HEK293 (cell line): ENCODE measurements at regions of chr21 and their contacts with region 1.

Region 1: GRCh38 chr21:29372063-29372802 is 73.5 kb downstream of the BACH1 start:
- H3K4me3 ChIP-seq: no peak overlapping the region
- H3K27ac ChIP-seq: no peak overlapping the region
- H3K4me1 ChIP-seq: no peaks in the 10 kb centered on the region
- CTCF ChIP-seq: peak; percentile 66

Region 2: DNA sequence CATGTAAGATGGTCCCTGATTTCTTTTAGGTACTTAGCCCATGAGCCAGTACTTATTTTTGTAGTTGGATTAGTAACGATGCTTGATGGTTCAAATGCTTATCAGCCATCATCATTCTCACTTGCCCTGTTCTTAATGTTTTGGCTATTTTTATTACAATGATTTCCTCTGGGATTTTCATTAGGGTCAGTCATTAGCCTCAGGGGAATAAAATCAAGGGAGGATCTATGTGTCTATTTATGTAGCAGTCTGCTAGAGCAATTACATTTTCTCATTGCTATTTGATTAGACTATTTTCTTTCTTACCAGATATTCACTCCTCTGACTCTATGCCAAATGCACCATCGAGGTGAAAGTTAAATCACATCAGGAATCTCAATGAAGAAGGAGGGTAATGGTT is 287.9 kb before region 1 on chr21:
- CTCF ChIA-PET with region 1: interaction called, 42 read pairs
- POLR2A ChIA-PET with region 1: no interaction called
- H3K4me3 ChIP-seq: no peak overlapping the region
- H3K27ac ChIP-seq: no peak overlapping the region
- H3K4me1 ChIP-seq: 0 out of 2 replicates have a peak, but pooled peaks cover 8% of the 10 kb centered on the region
- CTCF ChIP-seq: no peak

Region 3: DNA sequence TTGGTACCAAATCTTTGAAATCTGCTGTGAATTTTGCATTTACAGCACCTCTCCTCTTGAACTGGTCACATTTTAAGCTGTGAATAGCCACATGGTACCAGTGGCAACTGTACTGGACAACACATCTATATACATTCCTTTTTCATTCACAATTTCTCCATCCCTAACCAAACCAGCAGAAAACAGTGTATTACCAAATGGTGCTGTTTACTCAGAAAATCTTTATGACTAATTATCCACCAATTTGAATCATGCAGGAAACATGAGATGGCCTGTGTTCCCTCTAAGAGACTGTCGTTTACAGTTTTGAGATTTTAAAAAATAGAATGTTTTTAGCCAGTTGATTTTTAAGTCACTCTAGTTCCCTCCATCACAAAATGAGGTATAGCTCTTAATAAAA is 281.2 kb before region 1 on chr21:
- CTCF ChIA-PET with region 1: interaction called, 42 read pairs
- POLR2A ChIA-PET with region 1: no interaction called
- H3K4me3 ChIP-seq: no peak overlapping the region
- H3K27ac ChIP-seq: no peak overlapping the region
- H3K4me1 ChIP-seq: no peaks in the 10 kb centered on the region
- CTCF ChIP-seq: no peak

Region 4: GRCh38 chr21:29205009-29205408 is 167.2 kb before region 1 on chr21:
- CTCF ChIA-PET with region 1: no interaction called
- POLR2A ChIA-PET with region 1: no interaction called
- H3K4me3 ChIP-seq: no peak overlapping the region
- H3K27ac ChIP-seq: no peak overlapping the region
- H3K4me1 ChIP-seq: no peaks in the 10 kb centered on the region
- CTCF ChIP-seq: no peak

Region 5: GRCh38 chr21:29343519-29343918 is 28.7 kb before region 1 on chr21:
- CTCF ChIA-PET with region 1: interaction called, 16 read pairs
- POLR2A ChIA-PET with region 1: no interaction called
- H3K4me3 ChIP-seq: no peak overlapping the region
- H3K27ac ChIP-seq: no peak overlapping the region
- H3K4me1 ChIP-seq: peaks cover 12% of the 10 kb centered on the region
- CTCF ChIP-seq: no peak

Region 6: GRCh38 chr21:29351691-29352090 is 20.5 kb before region 1 on chr21:
- CTCF ChIA-PET with region 1: interaction called, 16 read pairs
- POLR2A ChIA-PET with region 1: no interaction called
- H3K4me3 ChIP-seq: no peak overlapping the region
- H3K27ac ChIP-seq: no peak overlapping the region
- H3K4me1 ChIP-seq: no peaks in the 10 kb centered on the region
- CTCF ChIP-seq: no peak

Region 7: DNA sequence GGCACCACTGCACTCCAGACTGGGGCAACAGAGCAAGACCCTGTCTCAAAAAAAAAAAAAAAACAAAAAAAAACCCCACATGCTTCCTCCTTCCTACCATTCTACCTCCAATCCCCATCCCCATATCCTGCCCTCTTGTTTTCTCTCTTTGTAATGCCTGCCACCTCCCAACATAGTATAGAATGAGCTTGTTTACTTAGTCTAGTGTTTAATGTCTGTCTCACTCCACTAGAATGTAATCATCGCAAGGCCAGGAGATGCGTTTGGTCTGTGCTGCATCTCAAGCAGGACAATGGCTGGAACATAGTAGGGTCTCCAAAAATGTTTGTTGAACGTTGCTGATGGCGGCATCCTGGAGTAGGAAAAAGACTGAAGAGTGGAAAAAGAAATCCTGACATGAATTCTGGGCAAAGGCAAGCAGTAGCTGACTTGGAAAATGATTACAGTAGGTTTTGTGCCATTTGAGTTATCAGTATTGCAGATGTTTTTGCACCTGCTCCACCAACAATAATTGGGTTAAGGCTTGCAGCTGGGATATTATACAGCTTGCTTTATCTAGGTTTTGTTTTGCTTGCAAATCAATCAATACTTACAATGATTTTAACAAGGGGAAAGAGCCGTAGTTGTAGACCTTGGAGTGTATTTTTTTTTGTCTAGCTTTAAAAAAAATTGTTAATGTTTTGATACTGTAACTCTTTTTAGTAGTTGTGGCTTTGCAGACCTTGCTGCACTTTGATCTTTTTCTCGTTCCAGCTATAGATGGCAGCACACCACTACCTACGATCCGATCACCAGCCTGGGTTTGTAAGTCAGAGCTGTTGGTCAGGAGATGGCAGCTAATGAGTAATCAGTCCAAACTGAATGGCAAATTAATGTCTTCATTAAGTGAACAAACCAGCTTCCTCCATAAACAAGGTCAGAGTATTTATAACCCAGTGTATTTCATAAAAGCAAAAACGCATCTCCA is 11.2 kb before region 1 on chr21:
- CTCF ChIA-PET with region 1: interaction called, 27 read pairs
- POLR2A ChIA-PET with region 1: no interaction called
- H3K4me3 ChIP-seq: no peak overlapping the region
- H3K27ac ChIP-seq: no peak overlapping the region
- H3K4me1 ChIP-seq: no peaks in the 10 kb centered on the region
- CTCF ChIP-seq: no peak

Region 8: GRCh38 chr21:29568020-29568697 is 195.9 kb after region 1 on chr21:
- CTCF ChIA-PET with region 1: no interaction called
- POLR2A ChIA-PET with region 1: no interaction called
- H3K4me3 ChIP-seq: no peak overlapping the region
- H3K27ac ChIP-seq: no peak overlapping the region
- H3K4me1 ChIP-seq: no peaks in the 10 kb centered on the region
- CTCF ChIP-seq: no peak